ENCODE measurements at regions of chr2 and their contacts with region 1.

Region 1: GRCh38 chr2:7867867-7868266 is 814.0 kb upstream of the ID2 start:
- DNase-seq: peak; percentile 69
- H3K4me3 Mint-ChIP-seq: no peak overlapping the region
- H3K27ac Mint-ChIP-seq: no peak overlapping the region
- H3K4me1 Mint-ChIP-seq: peaks cover 1% of the 10 kb centered on the region
- H3K27me3 Mint-ChIP-seq: no peaks in the 10 kb centered on the region

Region 2: GRCh38 chr2:7809640-7810039 is 58.2 kb before region 1 on chr2:
- intact Hi-C with region 1: no loop called
- DNase-seq: no peak
- H3K4me3 Mint-ChIP-seq: no peak overlapping the region
- H3K27ac Mint-ChIP-seq: no peak overlapping the region
- H3K4me1 Mint-ChIP-seq: no peaks in the 10 kb centered on the region
- H3K27me3 Mint-ChIP-seq: no peaks in the 10 kb centered on the region

Region 3: GRCh38 chr2:7915302-7916091 is 47.6 kb after region 1 on chr2:
- intact Hi-C with region 1: no loop called
- DNase-seq: peak; percentile 40
- H3K4me3 Mint-ChIP-seq: no peak overlapping the region
- H3K27ac Mint-ChIP-seq: no peak overlapping the region
- H3K4me1 Mint-ChIP-seq: peaks cover 2% of the 10 kb centered on the region
- H3K27me3 Mint-ChIP-seq: no peaks in the 10 kb centered on the region

Region 4: DNA sequence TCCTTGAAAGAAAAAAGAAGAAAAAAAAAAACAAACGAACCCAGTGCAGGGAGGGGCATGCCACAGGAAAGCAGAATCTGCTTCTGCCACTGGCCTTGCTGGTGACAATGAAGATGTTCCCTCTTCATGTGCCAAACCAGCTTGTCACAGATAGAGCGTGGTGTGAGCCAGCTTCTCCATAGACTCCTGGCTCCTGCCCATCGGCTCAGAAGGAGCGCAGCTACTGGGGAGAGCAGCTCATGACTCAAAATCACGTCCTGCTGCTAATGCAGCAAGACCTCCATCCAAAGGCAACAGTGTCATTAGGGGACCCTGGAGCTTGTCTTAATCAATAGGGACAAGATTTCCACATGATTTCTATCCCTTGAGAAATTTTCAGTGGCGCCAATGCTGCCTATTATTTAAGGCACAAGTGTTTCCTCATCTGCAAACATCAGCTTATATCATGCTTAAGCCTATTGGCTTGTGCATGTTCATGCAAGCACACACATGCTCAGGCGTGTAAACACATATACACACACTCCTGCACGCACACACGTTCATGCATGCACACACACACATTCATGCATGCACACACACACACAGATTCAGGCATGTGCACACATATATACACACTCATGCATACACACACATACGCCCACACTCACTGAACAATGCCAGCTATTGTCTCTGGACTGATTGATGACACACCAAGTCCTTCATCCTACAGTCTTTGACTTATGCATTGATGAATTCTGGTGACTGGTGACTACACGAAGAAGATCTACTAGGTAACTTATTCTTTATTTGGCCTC is 132.0 kb after region 1 on chr2:
- intact Hi-C with region 1: loop called (anchors 5 kb)
- DNase-seq: no peak
- H3K4me3 Mint-ChIP-seq: no peak overlapping the region
- H3K27ac Mint-ChIP-seq: no peak overlapping the region
- H3K4me1 Mint-ChIP-seq: peaks cover 28% of the 10 kb centered on the region
- H3K27me3 Mint-ChIP-seq: no peaks in the 10 kb centered on the region